IMR-90 (cell line): ENCODE measurements at regions of chr11 and their contacts with region 1.

Region 1: DNA sequence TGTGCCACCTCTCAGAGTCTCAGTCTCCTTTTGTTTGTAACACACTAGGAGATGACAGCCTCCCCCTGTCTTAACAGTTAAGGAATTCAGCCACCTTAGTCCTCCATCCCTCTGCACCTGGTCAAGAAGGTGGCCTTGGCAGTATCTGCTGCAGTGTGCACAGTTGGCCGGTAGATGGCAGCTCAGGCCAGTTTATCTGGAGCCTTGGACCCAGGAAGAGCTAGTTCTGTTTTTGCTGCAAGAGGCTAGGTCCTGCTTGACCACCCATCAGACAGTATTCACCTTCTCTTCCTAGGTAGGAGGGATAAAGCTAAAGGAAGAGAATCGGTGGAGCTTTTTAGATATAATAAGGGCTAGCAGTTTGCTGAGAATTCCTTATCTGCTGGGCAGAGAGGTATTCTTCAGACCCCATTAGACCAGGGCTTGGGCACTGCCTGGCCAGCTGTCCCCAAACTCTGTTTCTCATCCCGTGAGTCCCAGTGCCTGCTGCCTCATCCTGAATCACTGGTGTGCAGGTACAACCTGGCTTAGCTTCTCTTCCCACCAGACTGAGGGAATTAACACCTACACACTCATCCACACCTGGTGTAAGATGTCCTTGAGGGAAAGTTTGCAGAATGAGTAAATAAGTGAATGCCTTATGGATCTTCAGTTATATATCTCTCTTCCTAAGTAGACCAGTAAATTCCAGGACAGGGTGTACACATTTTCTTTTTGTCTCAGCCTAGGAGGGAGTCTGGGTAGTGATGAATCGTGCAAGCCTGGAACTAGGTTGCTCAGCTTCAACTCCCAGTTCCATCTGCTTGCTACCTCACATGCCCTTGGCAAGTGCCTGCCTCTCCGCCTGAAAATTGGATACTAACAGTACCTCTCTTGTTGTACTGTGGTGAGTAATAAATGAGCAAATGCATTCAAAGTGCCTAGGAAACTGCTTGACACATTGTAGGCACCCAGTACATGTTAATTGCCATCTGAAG is 70.8 kb upstream of the NARS2 start:
- DNase-seq: peak; percentile 72
- ATAC-seq: peak; percentile 95
- H3K4me3 ChIP-seq: no peak overlapping the region
- H3K27ac ChIP-seq: no peak overlapping the region
- H3K4me1 ChIP-seq: peaks cover 7% of the 10 kb centered on the region; the same call in 1 of the 2 replicates
- H3K27me3 ChIP-seq: no peaks in the 10 kb centered on the region
- CTCF ChIP-seq: peak; percentile 90
- POLR2A ChIP-seq: peak; percentile 2; the same call in 1 of the 2 replicates
- RAD21 ChIP-seq: peak; percentile 95

Region 2: GRCh38 chr11:78244546-78245255 is 400.8 kb before region 1 on chr11:
- CTCF ChIA-PET with region 1: no interaction called
- POLR2A ChIA-PET with region 1: no interaction called
- dilution Hi-C with region 1: no loop called
- in situ Hi-C with region 1: no loop called
- intact Hi-C with region 1: no loop called
- DNase-seq: no peak
- ATAC-seq: no peak
- H3K4me3 ChIP-seq: no peak overlapping the region
- H3K27ac ChIP-seq: no peak overlapping the region
- H3K4me1 ChIP-seq: no peaks in the 10 kb centered on the region
- H3K27me3 ChIP-seq: no peaks in the 10 kb centered on the region
- CTCF ChIP-seq: no peak
- POLR2A ChIP-seq: no peak
- RAD21 ChIP-seq: no peak

Region 3: DNA sequence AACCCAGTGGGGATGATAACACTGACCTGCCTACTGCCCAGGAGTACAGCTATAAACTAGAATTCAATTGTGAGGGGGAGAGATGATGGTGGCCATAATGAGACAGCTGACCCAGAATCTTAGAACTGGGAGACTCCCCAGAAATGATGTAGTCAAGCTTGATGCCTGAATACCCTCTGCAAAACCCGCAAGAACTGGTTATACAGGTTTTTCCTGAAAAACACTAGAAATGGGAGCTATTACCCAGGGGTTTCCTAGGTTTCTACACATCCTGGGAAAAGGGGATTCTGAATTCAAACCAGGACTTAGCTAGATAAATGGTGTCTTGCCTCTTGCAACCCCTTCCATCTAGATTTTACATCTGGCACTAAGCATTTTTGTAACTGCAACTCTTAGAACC is 43.0 kb after region 1 on chr11:
- CTCF ChIA-PET with region 1: no interaction called
- POLR2A ChIA-PET with region 1: no interaction called
- dilution Hi-C with region 1: no loop called
- in situ Hi-C with region 1: no loop called
- intact Hi-C with region 1: no loop called
- DNase-seq: no peak
- ATAC-seq: no peak
- H3K4me3 ChIP-seq: no peak overlapping the region
- H3K27ac ChIP-seq: no peak overlapping the region
- H3K4me1 ChIP-seq: peaks cover 3% of the 10 kb centered on the region; the same call in 1 of the 2 replicates
- H3K27me3 ChIP-seq: no peaks in the 10 kb centered on the region
- CTCF ChIP-seq: no peak
- POLR2A ChIP-seq: no peak
- RAD21 ChIP-seq: no peak

Region 4: DNA sequence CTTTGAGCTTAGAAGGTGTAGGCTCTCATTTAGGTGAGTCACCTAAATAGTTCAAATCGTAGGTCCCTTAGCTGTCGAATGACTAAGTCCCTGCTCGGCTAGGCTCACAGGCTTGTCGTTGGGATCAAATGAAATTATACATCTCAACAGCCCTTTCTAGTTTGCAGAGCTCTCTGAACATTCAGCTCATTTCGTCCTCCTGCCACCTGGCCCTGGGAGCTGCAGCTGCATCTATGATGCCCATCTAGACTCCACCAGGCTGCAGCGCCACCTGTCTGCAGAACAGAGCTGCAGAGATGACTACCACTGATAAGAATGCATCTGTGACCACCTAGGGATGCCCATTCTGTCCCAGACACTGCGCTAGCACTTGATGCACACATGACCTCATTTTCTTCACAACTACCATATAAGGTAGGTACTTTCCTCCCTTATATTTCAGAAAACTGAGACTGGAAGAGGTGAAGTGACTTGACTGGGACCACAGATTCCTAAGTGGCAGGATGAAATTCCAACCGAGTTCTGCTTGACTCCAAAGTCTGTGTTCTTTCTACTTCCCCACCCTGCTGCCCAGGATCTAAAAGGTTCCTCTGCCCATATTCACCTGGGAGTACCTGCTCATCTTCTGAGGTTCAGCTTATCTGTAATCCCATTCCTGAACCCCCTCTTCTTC is 70.3 kb after region 1 on chr11:
- CTCF ChIA-PET with region 1: interaction called, 10 read pairs
- POLR2A ChIA-PET with region 1: no interaction called
- dilution Hi-C with region 1: no loop called
- in situ Hi-C with region 1: no loop called
- intact Hi-C with region 1: loop called (anchors 1 kb)
- DNase-seq: peak; percentile 91
- ATAC-seq: peak; percentile 90
- H3K4me3 ChIP-seq: no peak overlapping the region
- H3K27ac ChIP-seq: no peak overlapping the region
- H3K4me1 ChIP-seq: peaks cover 4% of the 10 kb centered on the region; the same call in 1 of the 2 replicates
- H3K27me3 ChIP-seq: no peaks in the 10 kb centered on the region
- CTCF ChIP-seq: peak; percentile 81
- POLR2A ChIP-seq: no peak
- RAD21 ChIP-seq: peak; percentile 75

Region 5: GRCh38 chr11:78961247-78961646 is 315.7 kb after region 1 on chr11:
- CTCF ChIA-PET with region 1: interaction called, 10 read pairs
- POLR2A ChIA-PET with region 1: no interaction called
- dilution Hi-C with region 1: no loop called
- in situ Hi-C with region 1: loop called (anchors 5 kb)
- intact Hi-C with region 1: loop called (anchors 1 kb)
- DNase-seq: peak; percentile 46
- ATAC-seq: peak; percentile 37; the same call in 1 of the 2 replicates
- H3K4me3 ChIP-seq: no peak overlapping the region
- H3K27ac ChIP-seq: no peak overlapping the region
- H3K4me1 ChIP-seq: peaks cover 9% of the 10 kb centered on the region
- H3K27me3 ChIP-seq: no peaks in the 10 kb centered on the region
- CTCF ChIP-seq: peak; percentile 50
- POLR2A ChIP-seq: no peak
- RAD21 ChIP-seq: peak; percentile 70

Region 6: GRCh38 chr11:79100093-79100910 is 454.8 kb after region 1 on chr11:
- CTCF ChIA-PET with region 1: interaction called, 28 read pairs
- POLR2A ChIA-PET with region 1: no interaction called
- dilution Hi-C with region 1: no loop called
- in situ Hi-C with region 1: loop called (anchors 10 kb)
- intact Hi-C with region 1: loop called (anchors 1 kb)
- DNase-seq: peak; percentile 55
- ATAC-seq: peak; percentile 93
- H3K4me3 ChIP-seq: no peak overlapping the region
- H3K27ac ChIP-seq: no peak overlapping the region
- H3K4me1 ChIP-seq: peaks cover 5% of the 10 kb centered on the region
- H3K27me3 ChIP-seq: no peaks in the 10 kb centered on the region
- CTCF ChIP-seq: peak; percentile 77
- POLR2A ChIP-seq: no peak
- RAD21 ChIP-seq: peak; percentile 84

Region 7: GRCh38 chr11:79440441-79441194 is 795.1 kb after region 1 on chr11 and contains the start of gene TENM4:
- CTCF ChIA-PET with region 1: no interaction called
- POLR2A ChIA-PET with region 1: no interaction called
- dilution Hi-C with region 1: no loop called
- in situ Hi-C with region 1: no loop called
- intact Hi-C with region 1: loop called (anchors 1 kb)
- DNase-seq: peak; percentile 92
- ATAC-seq: peak; percentile 62
- H3K4me3 ChIP-seq: peak within 1 kb of the TSS; percentile 57
- H3K27ac ChIP-seq: peak within 1 kb of the TSS; percentile 77
- H3K4me1 ChIP-seq: peaks cover 6% of the 10 kb centered on the region
- H3K27me3 ChIP-seq: peaks cover 4% of the 10 kb centered on the region
- CTCF ChIP-seq: peak; percentile 53
- POLR2A ChIP-seq: peak; percentile 58; the same call in 1 of the 2 replicates
- RAD21 ChIP-seq: peak; percentile 36
- total RNA-seq, gene TENM4: 9.0 and 9.2 TPM in 2 replicates

Region 8: DNA sequence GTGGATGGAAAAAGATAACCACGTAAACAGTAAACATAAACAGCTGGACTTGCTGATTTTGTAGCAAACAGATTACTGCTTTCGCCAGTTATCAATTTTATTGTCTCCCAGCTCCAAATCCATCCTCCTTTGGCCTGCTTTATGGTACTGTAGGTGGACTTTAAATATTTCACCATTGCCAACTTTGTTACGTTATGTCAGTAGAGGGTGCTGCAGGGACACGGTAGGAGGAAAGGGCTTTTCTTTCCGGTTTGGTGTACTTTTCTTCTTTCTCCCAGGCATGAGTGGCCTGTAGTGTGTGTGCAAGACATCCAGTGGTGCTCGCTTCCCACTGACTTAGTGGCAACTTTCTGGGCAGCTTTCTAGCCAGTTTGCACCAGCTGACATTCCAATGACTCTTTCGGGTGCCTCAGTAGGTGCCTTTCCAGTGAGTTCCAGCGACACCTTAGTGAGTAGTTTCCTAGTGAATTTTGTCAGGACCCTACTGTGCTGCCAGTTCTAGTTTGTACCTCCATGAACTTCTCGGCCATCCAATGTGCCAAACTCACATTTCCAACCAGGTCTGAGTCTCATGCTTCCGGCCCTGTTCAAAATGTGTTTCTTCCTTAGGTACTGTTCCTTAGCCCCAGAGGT is 1062.9 kb after region 1 on chr11:
- CTCF ChIA-PET with region 1: no interaction called
- POLR2A ChIA-PET with region 1: no interaction called
- dilution Hi-C with region 1: no loop called
- in situ Hi-C with region 1: no loop called
- intact Hi-C with region 1: loop called (anchors 10 kb)
- DNase-seq: peak; percentile 50
- ATAC-seq: peak; percentile 83
- H3K4me3 ChIP-seq: no peak overlapping the region
- H3K27ac ChIP-seq: no peak overlapping the region
- H3K4me1 ChIP-seq: no peaks in the 10 kb centered on the region
- H3K27me3 ChIP-seq: no peaks in the 10 kb centered on the region
- CTCF ChIP-seq: peak; percentile 76
- POLR2A ChIP-seq: no peak
- RAD21 ChIP-seq: peak; percentile 92